Naive thymus-derived CD4-positive, alpha-beta T cell (primary cell): ENCODE measurements at regions of chr20 and their contacts with region 1.

Region 1: DNA sequence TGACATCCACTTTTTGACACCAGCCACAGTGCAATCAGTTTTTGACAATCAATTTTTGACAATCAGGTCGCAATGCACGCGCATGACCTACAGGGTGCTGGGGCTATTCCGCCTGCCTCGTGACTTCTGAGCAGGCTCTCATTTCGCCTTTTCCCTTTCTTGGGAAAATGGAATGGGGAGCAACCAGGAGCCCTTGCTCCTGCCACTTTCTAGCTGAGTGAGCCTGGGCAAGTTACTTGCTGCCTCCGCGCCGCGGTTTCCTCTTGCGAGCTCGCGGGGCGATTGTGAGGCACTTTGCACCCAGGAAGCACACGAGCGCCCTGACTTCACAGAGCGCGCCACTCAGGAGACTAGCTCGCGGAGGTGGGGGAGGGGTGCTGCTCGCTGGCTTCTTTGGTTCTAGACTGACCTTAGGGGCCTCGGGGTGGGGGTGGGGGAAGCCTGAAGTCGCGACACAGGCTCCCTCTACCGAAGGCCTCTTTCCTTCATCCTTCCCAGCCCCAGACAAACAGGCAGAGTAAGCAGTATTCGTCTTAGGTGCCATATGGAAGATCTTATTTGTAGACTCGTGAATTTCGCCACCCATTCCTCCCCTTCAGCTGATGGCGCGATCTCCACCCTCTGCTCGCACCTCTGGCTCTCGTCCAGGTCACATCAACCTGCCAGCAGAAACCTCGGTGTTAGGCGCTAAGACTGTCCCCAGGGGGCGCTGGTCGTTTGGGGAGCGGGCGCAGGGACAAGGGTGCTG is 4.6 kb downstream of the TP53TG5 start:
- DNase-seq: peak; percentile 81 to 90 (median 89)
- ATAC-seq: peak; percentile 94
- H3K4me3 ChIP-seq: peak overlapping the region; percentile 74
- H3K4me3 Mint-ChIP-seq: peak overlapping the region; percentile 84 to 94 (median 90)
- H3K27ac ChIP-seq: peak overlapping the region; percentile 77
- H3K27ac Mint-ChIP-seq: peak overlapping the region; percentile 87 to 97 (median 96)
- H3K4me1 ChIP-seq: peaks cover 13 to 29% of the 10 kb centered on the region in 2 donors
- H3K4me1 Mint-ChIP-seq: peaks cover 18 to 48% (median 46%) of the 10 kb centered on the region in 7 donors
- H3K27me3 ChIP-seq: no peaks in the 10 kb centered on the region
- H3K27me3 Mint-ChIP-seq: no peaks in the 10 kb centered on the region

Region 2: GRCh38 chr20:45406259-45407066 is 32.9 kb after region 1 on chr20:
- CTCF ChIA-PET with region 1: interaction called, 9 read pairs
- POLR2A ChIA-PET with region 1: interaction called, 17 read pairs
- intact Hi-C with region 1: loop called in 1 of 2 experiments (anchors 2 kb)
- DNase-seq: peak in 8 of 9 donors; percentile 22 to 68 (median 44)
- ATAC-seq: peak; percentile 58
- H3K4me3 ChIP-seq: peak overlapping the region; percentile 71
- H3K4me3 Mint-ChIP-seq: peak overlapping the region; percentile 82 to 92 (median 85)
- H3K27ac ChIP-seq: peak overlapping the region; percentile 74
- H3K27ac Mint-ChIP-seq: peak overlapping the region in 8 of 9 donors; percentile 51 to 90 (median 78)
- H3K4me1 ChIP-seq: peaks cover 0 to 7% of the 10 kb centered on the region in 2 donors
- H3K4me1 Mint-ChIP-seq: peaks cover 5 to 27% (median 21%) of the 10 kb centered on the region in 7 donors
- H3K27me3 ChIP-seq: no peaks in the 10 kb centered on the region
- H3K27me3 Mint-ChIP-seq: peaks cover 0 to 19% (median 0%) of the 10 kb centered on the region in 5 donors

Region 3: GRCh38 chr20:45450097-45450818 is 76.7 kb after region 1 on chr20:
- CTCF ChIA-PET with region 1: interaction called, 13 read pairs
- POLR2A ChIA-PET with region 1: interaction called, 6 read pairs
- intact Hi-C with region 1: no loop called
- DNase-seq: peak in 6 of 9 donors; percentile 19 to 51 (median 38)
- ATAC-seq: peak; percentile 76
- H3K4me3 ChIP-seq: no peak overlapping the region
- H3K4me3 Mint-ChIP-seq: no peak overlapping the region
- H3K27ac ChIP-seq: no peak overlapping the region
- H3K27ac Mint-ChIP-seq: no peak overlapping the region
- H3K4me1 ChIP-seq: no peaks in the 10 kb centered on the region
- H3K4me1 Mint-ChIP-seq: peaks cover 0 to 19% (median 8%) of the 10 kb centered on the region in 7 donors
- H3K27me3 ChIP-seq: peaks cover 0 to 6% of the 10 kb centered on the region in 2 donors
- H3K27me3 Mint-ChIP-seq: peaks cover 0 to 31% (median 3%) of the 10 kb centered on the region in 5 donors

Region 4: DNA sequence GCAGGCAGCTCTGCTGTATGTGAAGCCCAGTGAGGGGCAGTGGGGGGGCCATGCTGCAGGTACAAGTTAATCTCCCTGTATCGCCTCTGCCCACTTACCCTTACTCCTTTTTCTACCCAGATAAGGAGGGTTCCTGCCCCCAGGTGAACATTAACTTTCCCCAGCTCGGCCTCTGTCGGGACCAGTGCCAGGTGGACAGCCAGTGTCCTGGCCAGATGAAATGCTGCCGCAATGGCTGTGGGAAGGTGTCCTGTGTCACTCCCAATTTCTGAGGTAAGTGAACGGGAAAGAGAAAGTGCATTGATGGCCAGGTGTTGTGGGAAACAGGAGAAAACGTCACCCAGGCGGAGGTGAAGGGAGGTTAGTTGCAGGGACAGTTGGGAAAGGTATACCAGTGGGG is 106.3 kb after region 1 on chr20:
- CTCF ChIA-PET with region 1: no interaction called
- POLR2A ChIA-PET with region 1: no interaction called
- intact Hi-C with region 1: no loop called
- DNase-seq: no peak
- ATAC-seq: no peak
- H3K4me3 ChIP-seq: no peak overlapping the region
- H3K4me3 Mint-ChIP-seq: no peak overlapping the region
- H3K27ac ChIP-seq: no peak overlapping the region
- H3K27ac Mint-ChIP-seq: no peak overlapping the region
- H3K4me1 ChIP-seq: no peaks in the 10 kb centered on the region
- H3K4me1 Mint-ChIP-seq: peaks cover 0 to 1% (median 0%) of the 10 kb centered on the region in 7 donors
- H3K27me3 ChIP-seq: no peaks in the 10 kb centered on the region
- H3K27me3 Mint-ChIP-seq: peaks cover 22 to 31% (median 28%) of the 10 kb centered on the region in 5 donors

Region 5: DNA sequence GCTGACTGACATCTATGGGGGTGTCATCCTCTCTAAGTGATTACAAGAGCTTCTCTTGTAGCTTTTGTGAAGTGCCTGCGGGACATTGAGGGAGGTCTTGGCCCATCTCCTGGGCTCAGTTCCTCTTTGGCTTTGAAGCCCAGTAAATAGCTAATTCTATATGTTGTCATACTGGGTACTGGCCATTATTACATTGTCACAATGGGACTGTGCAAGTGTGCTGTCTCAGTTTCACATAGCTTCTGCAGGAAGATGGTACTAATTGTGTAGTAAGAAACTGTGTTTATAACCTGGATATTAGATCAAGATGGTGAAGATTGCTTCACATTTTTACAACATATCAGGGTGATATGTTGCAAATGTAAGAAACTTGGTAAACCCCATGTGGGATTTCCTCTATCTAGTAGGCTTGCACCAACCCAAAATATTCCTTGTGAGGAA is 122.0 kb after region 1 on chr20:
- CTCF ChIA-PET with region 1: no interaction called
- POLR2A ChIA-PET with region 1: no interaction called
- intact Hi-C with region 1: no loop called
- DNase-seq: no peak
- ATAC-seq: peak; percentile 67
- H3K4me3 ChIP-seq: no peak overlapping the region
- H3K4me3 Mint-ChIP-seq: no peak overlapping the region
- H3K27ac ChIP-seq: no peak overlapping the region
- H3K27ac Mint-ChIP-seq: no peak overlapping the region
- H3K4me1 ChIP-seq: no peaks in the 10 kb centered on the region
- H3K4me1 Mint-ChIP-seq: no peaks in the 10 kb centered on the region
- H3K27me3 ChIP-seq: no peaks in the 10 kb centered on the region
- H3K27me3 Mint-ChIP-seq: peaks cover 12 to 39% (median 19%) of the 10 kb centered on the region in 5 donors